ENCODE measurements at regions of chr1 and their contacts with region 1.

Region 1: GRCh38 chr1:145963995-145964901 is at the starts of genes ANKRD34A and POLR3GL:
- DNase-seq: peak; percentile 97
- ATAC-seq: peak; percentile 93
- H3K4me3 Mint-ChIP-seq: peak within 1 kb of the TSS; percentile 86
- H3K27ac Mint-ChIP-seq: peak within 1 kb of the TSS; percentile 91
- H3K4me1 Mint-ChIP-seq: peaks cover 52% of the 10 kb centered on the region
- H3K27me3 Mint-ChIP-seq: no peaks in the 10 kb centered on the region
- total RNA-seq, gene ANKRD34A: 3.8 to 4.6 TPM
- total RNA-seq, gene POLR3GL: 23.5 to 29.1 TPM

Region 2: DNA sequence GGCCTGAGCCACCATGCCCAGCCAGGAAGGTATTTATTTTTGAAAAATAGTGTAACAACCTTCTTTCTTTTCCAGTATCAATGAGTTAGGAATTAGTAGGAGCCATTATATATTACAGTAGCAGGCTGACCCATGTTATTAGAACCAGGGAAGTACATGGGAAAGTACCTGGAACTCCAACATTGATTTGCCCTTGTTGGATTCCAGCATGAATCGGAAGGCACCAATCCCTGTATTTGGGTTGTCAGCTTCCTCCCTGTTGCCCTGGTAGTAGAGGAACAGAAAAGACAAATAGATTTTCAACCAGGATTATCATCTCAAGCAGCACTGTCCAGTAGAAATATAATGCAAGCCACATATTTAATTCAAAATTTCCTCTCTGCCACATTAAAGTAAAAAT is 26.8 kb before region 1 on chr1:
- CTCF ChIA-PET with region 1: no interaction called
- DNase-seq: no peak
- ATAC-seq: no peak
- H3K4me3 Mint-ChIP-seq: no peak overlapping the region
- H3K27ac Mint-ChIP-seq: no peak overlapping the region
- H3K4me1 Mint-ChIP-seq: peaks cover 10% of the 10 kb centered on the region
- H3K27me3 Mint-ChIP-seq: no peaks in the 10 kb centered on the region

Region 3: GRCh38 chr1:145990249-145991097 is 26.2 kb after region 1 on chr1:
- CTCF ChIA-PET with region 1: no interaction called
- DNase-seq: no peak
- ATAC-seq: no peak
- H3K4me3 Mint-ChIP-seq: no peak overlapping the region
- H3K27ac Mint-ChIP-seq: no peak overlapping the region
- H3K4me1 Mint-ChIP-seq: peaks cover 46% of the 10 kb centered on the region
- H3K27me3 Mint-ChIP-seq: no peaks in the 10 kb centered on the region

Region 4: GRCh38 chr1:146012737-146013403 is 48.6 kb after region 1 on chr1:
- CTCF ChIA-PET with region 1: interaction called, 55 read pairs
- DNase-seq: peak; percentile 75
- ATAC-seq: peak; percentile 81
- H3K4me3 Mint-ChIP-seq: no peak overlapping the region
- H3K27ac Mint-ChIP-seq: no peak overlapping the region
- H3K4me1 Mint-ChIP-seq: peaks cover 6% of the 10 kb centered on the region
- H3K27me3 Mint-ChIP-seq: peaks cover 28% of the 10 kb centered on the region

Region 5: DNA sequence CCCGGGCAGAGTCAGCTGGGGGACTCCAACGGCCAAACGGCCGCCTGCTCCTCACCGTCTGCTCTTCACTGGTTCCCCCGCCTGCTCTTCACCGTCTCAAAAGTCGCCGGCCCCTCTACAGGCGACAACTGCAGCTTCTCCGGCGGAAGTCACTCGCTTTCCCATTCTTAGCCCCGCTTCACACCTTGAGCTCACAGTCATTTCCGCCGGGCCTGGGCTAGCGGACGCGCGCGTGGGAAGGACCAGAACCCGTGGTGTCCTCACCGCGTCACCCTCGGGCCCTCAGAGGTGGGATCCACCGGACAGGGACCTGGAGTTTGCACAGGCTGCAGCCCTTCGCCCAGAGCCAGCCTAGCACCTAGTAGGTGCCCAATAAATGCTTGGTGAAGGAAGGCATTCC is 85.2 kb after region 1 on chr1:
- CTCF ChIA-PET with region 1: no interaction called
- DNase-seq: no peak
- ATAC-seq: no peak
- H3K4me3 Mint-ChIP-seq: peak overlapping the region; percentile 35
- H3K27ac Mint-ChIP-seq: no peak overlapping the region
- H3K4me1 Mint-ChIP-seq: peaks cover 35% of the 10 kb centered on the region
- H3K27me3 Mint-ChIP-seq: peaks cover 4% of the 10 kb centered on the region